ENCODE measurements at regions of chr6 and their contacts with region 1.

Region 1: DNA sequence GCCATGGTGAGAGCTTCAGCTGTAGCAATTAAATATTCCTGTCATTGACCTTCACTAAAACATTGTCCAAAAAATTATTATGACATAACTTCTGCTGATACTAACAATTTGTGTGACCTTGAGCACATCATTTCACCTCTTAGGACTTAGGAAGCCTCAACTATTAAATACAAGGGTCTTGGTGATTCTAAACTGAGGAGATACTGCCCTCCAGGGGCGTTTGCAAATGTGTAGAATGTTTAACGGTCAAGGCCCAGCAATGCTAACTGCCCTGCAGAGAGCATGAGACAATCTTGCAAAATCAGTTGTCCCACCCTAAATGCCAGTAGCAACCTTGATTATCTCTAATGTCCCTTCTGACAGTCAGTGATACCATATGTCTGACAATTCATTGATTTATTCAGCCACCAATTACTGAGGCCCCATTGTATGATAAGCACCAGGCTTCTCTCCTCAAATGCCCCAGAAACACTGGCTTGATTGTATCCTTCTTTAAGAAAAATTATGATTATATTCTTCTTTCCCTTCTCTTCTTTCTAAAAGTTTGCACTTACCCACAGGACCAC is 284.1 kb upstream of the PLN start:
- DNase-seq: peak in 29 of 42 donors; percentile 8 to 73 (median 38)

Region 2: GRCh38 chr6:117976030-117976651 is 287.9 kb before region 1 on chr6:
- intact Hi-C with region 1: loop called (anchors 10 kb)
- DNase-seq: peak in 11 of 42 donors; percentile 28 to 73 (median 53)

Region 3: DNA sequence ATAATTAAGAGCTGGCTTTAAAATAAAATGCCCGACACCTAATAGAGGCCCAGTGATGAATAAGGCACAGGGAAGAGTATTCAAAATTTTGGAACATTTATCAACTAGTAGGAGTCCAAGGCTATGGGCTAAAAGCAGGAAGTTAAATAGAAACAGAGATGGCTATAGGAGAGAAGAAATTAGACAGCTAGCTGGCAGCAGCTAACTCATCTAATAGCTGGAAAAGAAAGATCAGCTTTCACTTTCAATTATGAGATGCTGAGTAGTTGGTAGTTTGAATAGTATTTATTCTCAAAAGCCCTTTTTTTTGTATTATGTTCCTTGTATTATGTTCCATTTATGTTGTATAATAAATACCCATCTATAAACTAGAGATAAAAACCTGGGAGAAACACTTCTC is 141.2 kb before region 1 on chr6:
- intact Hi-C with region 1: no loop called
- DNase-seq: no peak

Region 4: GRCh38 chr6:118198746-118199145 is 65.3 kb before region 1 on chr6:
- intact Hi-C with region 1: no loop called
- DNase-seq: no peak

Region 5: GRCh38 chr6:118537574-118537973 is 273.6 kb after region 1 on chr6:
- intact Hi-C with region 1: no loop called
- DNase-seq: no peak

Measured in head of caudate nucleus (tissue), 42 donors.